ENCODE measurements at regions of chr1 and their contacts with region 1.

Region 1: DNA sequence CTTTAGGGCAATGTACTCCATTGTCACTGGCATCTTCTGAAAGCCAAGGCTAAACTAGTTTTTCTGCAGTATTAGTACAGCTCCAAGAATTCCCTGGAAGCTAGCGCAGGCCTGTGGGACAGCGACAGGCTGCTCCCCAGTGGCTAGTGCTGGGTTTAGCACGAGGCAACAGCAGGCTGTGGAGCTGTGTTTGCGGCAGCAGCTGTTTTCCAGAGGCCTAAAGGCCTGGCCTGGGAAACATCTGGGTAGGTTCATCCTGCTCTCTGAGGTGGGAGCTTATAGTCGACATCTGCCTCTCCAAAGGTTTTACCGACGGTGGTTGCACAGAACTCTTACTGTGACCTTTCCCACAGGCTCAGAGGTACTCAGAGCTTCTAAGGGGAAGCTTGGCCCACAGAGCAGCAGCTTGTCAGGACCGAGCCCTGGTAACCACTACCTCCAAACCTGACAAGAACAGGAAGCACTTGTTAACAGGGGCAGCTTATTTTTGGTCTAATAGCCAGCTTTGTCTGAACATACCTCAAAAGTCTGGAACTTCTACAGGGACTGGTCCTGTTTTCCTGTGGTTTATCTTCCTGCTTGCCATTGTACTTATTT is 17.2 kb downstream of the CC2D1B start:
- DNase-seq: peak in 2 of 4 experiments; percentile 43 to 49
- ATAC-seq: peak; percentile 81
- H3K4me3 ChIP-seq: no peak overlapping the region
- H3K27ac ChIP-seq: no peak overlapping the region
- H3K4me1 ChIP-seq: no peaks in the 10 kb centered on the region; a peak in 1 of 5 replicates
- H3K27me3 ChIP-seq: no peaks in the 10 kb centered on the region
- CTCF ChIP-seq: peak; percentile 52 to 55 (median 53)
- EP300 ChIP-seq: no peak
- POLR2A ChIP-seq: peak; percentile 48; the same call in 1 of the 2 replicates
- RAD21 ChIP-seq: peak; percentile 26 to 76

Region 2: DNA sequence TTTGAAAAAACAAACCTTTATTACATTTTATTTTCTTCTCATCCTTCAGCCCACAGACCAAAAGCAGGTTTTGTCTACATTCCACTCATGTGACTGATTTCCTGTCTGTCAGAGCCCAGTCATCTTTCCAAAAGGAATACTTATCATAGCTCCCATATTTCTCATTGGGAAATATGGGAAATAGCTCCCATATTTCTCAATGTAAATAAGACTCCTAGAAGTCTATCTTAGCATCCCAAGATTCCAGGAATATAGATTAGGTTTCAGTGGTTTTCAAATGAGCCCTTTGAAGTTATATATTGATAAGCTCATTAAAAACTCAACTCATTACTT is 451.1 kb before region 1 on chr1:
- CTCF ChIA-PET with region 1: no interaction called
- POLR2A ChIA-PET with region 1: no interaction called
- in situ Hi-C with region 1: no loop called
- intact Hi-C with region 1: loop called (anchors 10 kb)
- DNase-seq: no peak
- ATAC-seq: no peak
- H3K4me3 ChIP-seq: no peak overlapping the region
- H3K27ac ChIP-seq: no peak overlapping the region
- H3K4me1 ChIP-seq: no peaks in the 10 kb centered on the region; a peak in 1 of 5 replicates
- H3K27me3 ChIP-seq: peaks cover 0 to 20% of the 10 kb centered on the region in 2 experiments; a peak in 3 of 5 replicates
- CTCF ChIP-seq: no peak
- EP300 ChIP-seq: no peak
- POLR2A ChIP-seq: no peak
- RAD21 ChIP-seq: no peak

Region 3: GRCh38 chr1:52127181-52128180 is 221.3 kb before region 1 on chr1:
- CTCF ChIA-PET with region 1: interaction called, 4 read pairs
- POLR2A ChIA-PET with region 1: no interaction called
- in situ Hi-C with region 1: no loop called
- intact Hi-C with region 1: loop called (anchors 2 kb)
- DNase-seq: peak in 2 of 4 experiments; percentile 47 to 67
- ATAC-seq: peak; percentile 93
- H3K4me3 ChIP-seq: no peak overlapping the region
- H3K27ac ChIP-seq: no peak overlapping the region
- H3K4me1 ChIP-seq: no peaks in the 10 kb centered on the region
- H3K27me3 ChIP-seq: peaks cover 0 to 3% of the 10 kb centered on the region in 2 experiments; a peak in 4 of 5 replicates
- CTCF ChIP-seq: peak; percentile 58 to 87 (median 75); a peak in 5 of 6 replicates
- EP300 ChIP-seq: no peak
- POLR2A ChIP-seq: no peak
- RAD21 ChIP-seq: peak; percentile 81 to 92

Region 4: GRCh38 chr1:52296345-52296744 is 52.5 kb before region 1 on chr1:
- CTCF ChIA-PET with region 1: no interaction called
- POLR2A ChIA-PET with region 1: no interaction called
- in situ Hi-C with region 1: no loop called
- intact Hi-C with region 1: loop called (anchors 1 kb)
- DNase-seq: peak; percentile 48 to 73 (median 59)
- ATAC-seq: peak; percentile 96
- H3K4me3 ChIP-seq: no peak overlapping the region
- H3K27ac ChIP-seq: no peak overlapping the region
- H3K4me1 ChIP-seq: no peaks in the 10 kb centered on the region
- H3K27me3 ChIP-seq: no peaks in the 10 kb centered on the region
- CTCF ChIP-seq: peak; percentile 79 to 96 (median 80)
- EP300 ChIP-seq: no peak
- POLR2A ChIP-seq: no peak
- RAD21 ChIP-seq: peak; percentile 95 to 98

Region 5: GRCh38 chr1:52334906-52335528 is 13.8 kb before region 1 on chr1:
- CTCF ChIA-PET with region 1: no interaction called
- POLR2A ChIA-PET with region 1: interaction called, 15 read pairs
- in situ Hi-C with region 1: no loop called
- intact Hi-C with region 1: no loop called
- DNase-seq: no peak
- ATAC-seq: no peak
- H3K4me3 ChIP-seq: no peak overlapping the region
- H3K27ac ChIP-seq: no peak overlapping the region
- H3K4me1 ChIP-seq: peaks cover 1 to 6% of the 10 kb centered on the region in 2 experiments; a peak in 2 of 5 replicates
- H3K27me3 ChIP-seq: no peaks in the 10 kb centered on the region
- CTCF ChIP-seq: no peak
- EP300 ChIP-seq: no peak
- POLR2A ChIP-seq: no peak
- RAD21 ChIP-seq: no peak

Region 6: GRCh38 chr1:52359676-52360594 is 11.1 kb after region 1 on chr1:
- CTCF ChIA-PET with region 1: no interaction called
- POLR2A ChIA-PET with region 1: interaction called, 18 read pairs
- in situ Hi-C with region 1: no loop called
- intact Hi-C with region 1: no loop called
- DNase-seq: no peak
- ATAC-seq: no peak
- H3K4me3 ChIP-seq: no peak overlapping the region
- H3K27ac ChIP-seq: no peak overlapping the region
- H3K4me1 ChIP-seq: peaks cover 7 to 9% of the 10 kb centered on the region in 2 experiments; a peak in 4 of 5 replicates
- H3K27me3 ChIP-seq: no peaks in the 10 kb centered on the region
- CTCF ChIP-seq: peak in 1 of 3 experiments; percentile 12; a peak in 1 of 6 replicates
- EP300 ChIP-seq: no peak
- POLR2A ChIP-seq: no peak
- RAD21 ChIP-seq: no peak

Region 7: GRCh38 chr1:52365746-52366516 is 17.1 kb after region 1 on chr1 and contains the start of gene CC2D1B:
- CTCF ChIA-PET with region 1: no interaction called
- POLR2A ChIA-PET with region 1: interaction called, 18 read pairs
- in situ Hi-C with region 1: no loop called
- intact Hi-C with region 1: no loop called
- DNase-seq: peak; percentile 100
- ATAC-seq: peak; percentile 96
- H3K4me3 ChIP-seq: peak within 1 kb of the TSS; percentile 77
- H3K27ac ChIP-seq: peak within 1 kb of the TSS; percentile 93
- H3K4me1 ChIP-seq: peaks cover 21 to 37% of the 10 kb centered on the region in 2 experiments
- H3K27me3 ChIP-seq: no peaks in the 10 kb centered on the region
- CTCF ChIP-seq: peak in 2 of 3 experiments; percentile 21 to 27; a peak in 4 of 6 replicates
- EP300 ChIP-seq: peak; percentile 18; the same call in 1 of the 2 replicates
- POLR2A ChIP-seq: peak; percentile 93
- RAD21 ChIP-seq: peak in 1 of 2 experiments; percentile 15; a peak in 1 of 4 replicates
- polyA plus RNA-seq, gene CC2D1B: 1.2 to 1.5 TPM

Measured in K562 (cell line).